ENCODE measurements at regions of chr5 and their contacts with region 1.

Region 1: DNA sequence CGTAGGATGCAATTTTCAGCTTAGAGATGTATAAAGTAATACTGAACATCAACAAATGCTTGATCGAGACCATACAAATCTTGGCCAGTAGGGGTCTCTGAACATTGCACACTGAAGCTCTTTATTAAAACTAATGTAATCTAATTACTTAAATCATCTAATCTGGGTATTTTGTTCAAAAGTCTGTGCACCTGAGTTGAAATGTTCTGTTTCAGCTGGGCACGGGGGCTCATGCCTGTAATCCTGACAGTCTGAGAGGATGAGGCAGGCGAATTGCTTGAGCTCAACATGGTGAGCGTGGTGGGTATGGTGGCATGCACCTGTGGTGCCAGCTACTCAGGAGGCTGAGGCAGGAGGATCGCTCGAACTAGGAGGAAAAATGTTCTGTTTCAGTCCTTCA is 41.0 kb downstream of the ESM1 start:
- DNase-seq: peak; percentile 60
- H3K4me3 Mint-ChIP-seq: no peak overlapping the region
- H3K27ac Mint-ChIP-seq: no peak overlapping the region
- H3K4me1 Mint-ChIP-seq: no peaks in the 10 kb centered on the region
- H3K27me3 Mint-ChIP-seq: no peaks in the 10 kb centered on the region

Region 2: DNA sequence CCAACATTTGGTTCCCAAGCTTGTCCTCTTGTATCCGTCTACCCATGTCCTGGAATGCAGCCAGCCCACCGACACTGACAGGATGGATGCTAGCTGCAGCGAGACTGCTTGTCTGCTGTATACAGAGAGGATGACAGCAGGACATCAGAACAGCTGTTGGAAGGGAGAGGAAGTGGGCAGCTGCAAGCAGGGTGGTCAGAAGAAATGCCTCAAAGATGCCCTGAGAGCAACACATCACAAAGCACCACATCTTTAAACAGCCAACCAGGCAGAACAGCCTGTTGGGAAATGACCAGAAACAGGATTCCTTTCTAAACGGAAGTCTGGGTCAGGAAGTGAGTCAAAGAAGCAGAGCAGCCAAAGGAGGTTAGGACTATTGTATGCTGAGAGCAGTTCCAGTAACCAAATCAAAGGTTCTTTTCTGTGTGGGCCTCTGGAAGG is 1164.8 kb before region 1 on chr5:
- CTCF ChIA-PET with region 1: no interaction called
- intact Hi-C with region 1: no loop called
- DNase-seq: peak; percentile 5
- H3K4me3 Mint-ChIP-seq: no peak overlapping the region
- H3K27ac Mint-ChIP-seq: no peak overlapping the region
- H3K4me1 Mint-ChIP-seq: peaks cover 13% of the 10 kb centered on the region
- H3K27me3 Mint-ChIP-seq: peaks cover 4% of the 10 kb centered on the region

Region 3: DNA sequence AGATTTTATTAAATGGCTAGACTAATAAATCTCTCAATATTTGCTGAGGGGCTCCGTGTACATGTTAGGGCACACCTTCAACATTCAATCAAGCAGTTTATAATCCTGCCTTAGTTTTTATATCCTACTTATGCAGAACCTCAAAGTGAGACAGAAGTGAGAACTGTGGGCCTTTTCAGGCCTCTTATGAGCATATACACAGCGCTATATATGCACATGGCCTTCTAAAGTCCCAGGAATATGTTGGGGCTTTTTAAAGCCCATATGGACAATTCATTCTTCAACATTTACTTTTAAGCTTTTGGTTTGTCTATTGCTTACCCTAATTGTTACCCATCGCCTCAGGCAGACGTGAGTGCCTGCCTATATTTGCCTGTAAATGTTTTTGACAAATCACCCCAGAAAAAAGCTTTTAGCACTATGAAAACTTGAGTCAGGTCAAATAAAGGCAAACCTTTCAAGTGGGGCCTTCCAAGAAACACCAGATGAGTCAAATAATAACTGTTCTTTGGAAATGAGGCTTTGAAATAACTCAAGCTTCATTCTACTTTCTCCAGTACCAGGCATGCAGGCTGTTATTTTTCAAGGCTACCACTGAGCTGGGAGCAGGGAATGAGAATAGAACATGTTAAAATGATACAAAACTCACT is 17.1 kb before region 1 on chr5:
- CTCF ChIA-PET with region 1: interaction called, 20 read pairs
- intact Hi-C with region 1: no loop called
- DNase-seq: no peak
- H3K4me3 Mint-ChIP-seq: no peak overlapping the region
- H3K27ac Mint-ChIP-seq: no peak overlapping the region
- H3K4me1 Mint-ChIP-seq: peaks cover 3% of the 10 kb centered on the region
- H3K27me3 Mint-ChIP-seq: peaks cover 2% of the 10 kb centered on the region

Region 4: DNA sequence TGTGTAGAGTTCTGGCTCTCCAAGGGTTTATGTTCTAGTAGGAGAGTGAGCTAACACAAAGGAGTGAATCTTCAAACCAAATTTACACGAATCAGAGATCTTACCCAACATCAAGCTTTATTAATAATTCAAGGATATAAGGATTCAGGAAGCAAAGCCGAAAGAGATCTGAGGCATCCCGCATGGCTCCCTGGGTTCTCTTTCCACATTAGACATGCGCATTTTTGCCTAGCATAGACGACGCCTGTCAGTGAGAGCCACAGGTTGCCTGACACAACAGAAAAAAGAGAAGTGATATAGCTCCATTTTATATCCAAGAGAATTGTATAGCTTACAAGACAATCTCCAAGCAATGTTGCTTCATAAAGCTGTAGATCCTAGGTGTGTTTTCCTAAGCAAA is 11.6 kb before region 1 on chr5:
- CTCF ChIA-PET with region 1: interaction called, 20 read pairs
- intact Hi-C with region 1: no loop called
- DNase-seq: no peak
- H3K4me3 Mint-ChIP-seq: no peak overlapping the region
- H3K27ac Mint-ChIP-seq: no peak overlapping the region
- H3K4me1 Mint-ChIP-seq: no peaks in the 10 kb centered on the region
- H3K27me3 Mint-ChIP-seq: peaks cover 11% of the 10 kb centered on the region

Region 5: GRCh38 chr5:54959673-54960418 is 15.5 kb after region 1 on chr5:
- CTCF ChIA-PET with region 1: interaction called, 26 read pairs
- intact Hi-C with region 1: no loop called
- DNase-seq: peak; percentile 65
- H3K4me3 Mint-ChIP-seq: no peak overlapping the region
- H3K27ac Mint-ChIP-seq: no peak overlapping the region
- H3K4me1 Mint-ChIP-seq: no peaks in the 10 kb centered on the region
- H3K27me3 Mint-ChIP-seq: peaks cover 2% of the 10 kb centered on the region

Region 6: DNA sequence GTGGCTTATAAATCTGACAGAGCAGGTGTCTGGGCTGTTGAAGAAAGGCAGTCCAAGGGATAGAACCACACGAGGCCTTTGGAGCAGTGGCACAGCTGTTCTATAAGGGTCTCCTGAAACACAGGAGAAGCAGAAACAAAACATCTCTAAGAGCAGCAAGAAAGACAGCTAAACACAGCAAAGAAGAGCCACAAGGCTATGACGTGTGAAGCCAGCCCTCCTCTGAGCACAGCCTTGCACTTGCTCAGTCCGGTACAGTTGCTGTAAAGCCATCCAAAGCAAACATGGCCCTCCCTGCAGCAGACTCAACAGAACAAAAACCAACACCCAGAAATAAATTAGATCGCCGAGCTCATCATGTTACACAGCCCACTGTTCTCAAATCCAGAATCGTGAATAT is 77.0 kb after region 1 on chr5:
- CTCF ChIA-PET with region 1: interaction called, 11 read pairs
- intact Hi-C with region 1: no loop called
- DNase-seq: no peak
- H3K4me3 Mint-ChIP-seq: no peak overlapping the region
- H3K27ac Mint-ChIP-seq: no peak overlapping the region
- H3K4me1 Mint-ChIP-seq: peaks cover 41% of the 10 kb centered on the region
- H3K27me3 Mint-ChIP-seq: no peaks in the 10 kb centered on the region

Region 7: GRCh38 chr5:55146543-55147151 is 202.3 kb after region 1 on chr5:
- CTCF ChIA-PET with region 1: interaction called, 87 read pairs
- intact Hi-C with region 1: loop called (anchors 1 kb)
- DNase-seq: peak; percentile 90
- H3K4me3 Mint-ChIP-seq: no peak overlapping the region
- H3K27ac Mint-ChIP-seq: no peak overlapping the region
- H3K4me1 Mint-ChIP-seq: peaks cover 12% of the 10 kb centered on the region
- H3K27me3 Mint-ChIP-seq: peaks cover 4% of the 10 kb centered on the region

Region 8: DNA sequence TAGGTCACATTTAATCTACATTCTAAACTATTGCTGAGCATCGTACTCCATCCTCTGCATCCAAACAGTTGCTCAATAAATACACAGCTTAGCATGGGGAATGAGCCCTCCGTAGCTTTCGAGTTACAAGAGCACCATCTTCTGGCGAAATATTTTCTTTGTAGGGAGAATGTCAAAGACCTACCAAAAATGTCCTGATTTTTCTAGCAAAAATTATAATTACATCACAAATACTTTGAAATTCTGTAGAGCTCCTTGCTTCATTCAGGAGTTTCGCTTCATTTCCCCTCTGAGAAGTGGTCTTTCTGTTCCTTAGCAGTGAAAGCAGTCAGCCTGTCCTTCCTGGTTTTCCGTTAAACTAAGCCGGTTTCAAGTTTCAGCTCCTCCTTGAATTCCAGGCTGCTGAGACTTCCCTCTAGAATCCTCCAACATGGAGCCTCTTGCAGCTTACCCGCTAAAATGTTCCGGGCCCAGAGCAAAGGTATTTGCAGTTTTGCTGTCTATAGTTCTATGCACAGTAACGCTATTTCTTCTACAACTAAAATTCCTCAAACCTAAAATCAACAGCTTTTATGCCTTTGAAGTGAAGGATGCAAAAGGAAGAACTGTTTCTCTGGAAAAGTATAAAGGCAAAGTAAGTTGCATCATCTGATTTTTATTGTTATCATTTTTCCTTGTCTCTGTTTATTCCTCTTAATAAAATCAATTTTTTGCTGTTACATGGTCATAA is 215.6 kb after region 1 on chr5 and contains the start of gene GPX8:
- CTCF ChIA-PET with region 1: interaction called, 28 read pairs
- intact Hi-C with region 1: no loop called
- DNase-seq: peak; percentile 29
- H3K4me3 Mint-ChIP-seq: no peak within 1 kb of the TSS
- H3K27ac Mint-ChIP-seq: no peak within 1 kb of the TSS
- H3K4me1 Mint-ChIP-seq: no peaks in the 10 kb centered on the region
- H3K27me3 Mint-ChIP-seq: peaks cover 18% of the 10 kb centered on the region
- total RNA-seq, gene GPX8: not detected

Region 9: DNA sequence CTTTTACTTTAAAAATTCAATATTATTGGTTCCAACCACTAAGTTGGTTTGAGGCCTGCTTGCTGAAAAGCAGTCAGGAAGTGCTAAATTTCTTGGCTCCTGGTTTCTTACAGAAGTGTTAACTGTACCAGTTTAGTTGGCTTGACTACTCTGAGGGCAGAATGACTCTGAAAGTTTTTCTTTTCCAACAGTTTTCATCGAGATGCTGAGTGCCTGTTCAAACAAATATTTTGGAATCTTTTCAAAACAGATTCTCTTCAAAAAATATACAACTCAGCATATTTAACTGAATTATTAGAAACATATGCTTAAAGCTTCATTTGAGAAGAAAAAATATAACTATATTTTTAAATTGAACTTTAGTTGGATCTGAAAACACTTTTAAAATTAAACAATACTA is 730.8 kb after region 1 on chr5:
- CTCF ChIA-PET with region 1: no interaction called
- intact Hi-C with region 1: no loop called
- DNase-seq: no peak
- H3K4me3 Mint-ChIP-seq: no peak overlapping the region
- H3K27ac Mint-ChIP-seq: no peak overlapping the region
- H3K4me1 Mint-ChIP-seq: no peaks in the 10 kb centered on the region
- H3K27me3 Mint-ChIP-seq: no peaks in the 10 kb centered on the region

Measured in activated naive CD4-positive, alpha-beta T cell treated with anti-CD3 and anti-CD28 coated beads for 36 hours (primary cell).